Heart left ventricle (tissue), 16 donors: ENCODE measurements at regions of chr13 and their contacts with region 1.

Region 1: DNA sequence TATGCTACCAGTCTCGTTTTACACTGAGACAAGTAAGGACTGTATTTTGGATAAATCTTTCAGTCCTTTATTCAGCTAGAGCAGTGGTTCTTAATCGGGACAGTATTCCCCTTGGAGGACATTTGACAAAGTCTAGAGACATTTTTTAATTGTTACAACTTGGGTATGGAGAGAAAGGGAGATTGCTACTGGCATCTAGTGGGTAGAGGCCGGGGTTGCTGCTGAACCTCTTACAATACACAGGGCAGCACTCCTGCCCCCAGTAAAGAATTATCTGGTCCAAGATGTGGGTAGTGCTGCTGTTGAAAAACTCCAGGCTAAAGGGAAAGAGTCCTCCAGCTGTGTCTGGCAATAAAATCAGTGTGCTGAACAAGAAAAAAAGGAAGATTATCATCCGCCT is 334.8 kb downstream of the SLC7A1 start:
- DNase-seq: no peak
- ATAC-seq: peak; percentile 56 to 87 (median 83)
- H3K4me3 ChIP-seq: no peak overlapping the region
- H3K27ac ChIP-seq: no peak overlapping the region
- H3K4me1 ChIP-seq: peaks cover 0 to 3% (median 0%) of the 10 kb centered on the region in 12 donors
- H3K27me3 ChIP-seq: no peaks in the 10 kb centered on the region
- CTCF ChIP-seq: peak in 10 of 12 donors; percentile 16 to 52 (median 39)
- POLR2A ChIP-seq: no peak

Region 2: DNA sequence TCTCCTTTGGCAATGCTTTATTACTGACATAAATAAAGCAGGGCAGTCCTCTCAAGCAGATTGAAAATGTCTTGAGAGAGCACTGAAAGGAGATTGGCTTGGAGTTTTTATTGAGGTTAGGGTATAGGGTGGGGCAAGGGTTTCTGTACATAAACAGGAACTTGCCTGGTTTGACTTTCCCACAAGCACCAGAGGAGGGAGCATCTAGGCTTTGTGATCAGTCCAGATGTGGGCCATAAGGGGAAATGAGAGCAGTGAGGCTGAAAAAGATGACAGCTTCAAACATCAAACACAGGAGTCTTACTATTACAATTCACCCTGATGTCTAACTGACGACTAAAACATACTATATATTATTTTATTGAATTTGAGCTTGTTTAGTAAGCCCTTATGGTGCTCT is 179.6 kb before region 1 on chr13:
- intact Hi-C with region 1: loop called in 1 of 10 experiments (anchors 5 kb)
- DNase-seq: no peak
- ATAC-seq: peak in 1 of 4 donors; percentile 53
- H3K4me3 ChIP-seq: no peak overlapping the region
- H3K27ac ChIP-seq: no peak overlapping the region
- H3K4me1 ChIP-seq: peaks cover 0 to 7% (median 0%) of the 10 kb centered on the region in 12 donors
- H3K27me3 ChIP-seq: no peaks in the 10 kb centered on the region
- CTCF ChIP-seq: peak in 3 of 12 donors; percentile 16 to 25 (median 17)
- POLR2A ChIP-seq: no peak

Region 3: DNA sequence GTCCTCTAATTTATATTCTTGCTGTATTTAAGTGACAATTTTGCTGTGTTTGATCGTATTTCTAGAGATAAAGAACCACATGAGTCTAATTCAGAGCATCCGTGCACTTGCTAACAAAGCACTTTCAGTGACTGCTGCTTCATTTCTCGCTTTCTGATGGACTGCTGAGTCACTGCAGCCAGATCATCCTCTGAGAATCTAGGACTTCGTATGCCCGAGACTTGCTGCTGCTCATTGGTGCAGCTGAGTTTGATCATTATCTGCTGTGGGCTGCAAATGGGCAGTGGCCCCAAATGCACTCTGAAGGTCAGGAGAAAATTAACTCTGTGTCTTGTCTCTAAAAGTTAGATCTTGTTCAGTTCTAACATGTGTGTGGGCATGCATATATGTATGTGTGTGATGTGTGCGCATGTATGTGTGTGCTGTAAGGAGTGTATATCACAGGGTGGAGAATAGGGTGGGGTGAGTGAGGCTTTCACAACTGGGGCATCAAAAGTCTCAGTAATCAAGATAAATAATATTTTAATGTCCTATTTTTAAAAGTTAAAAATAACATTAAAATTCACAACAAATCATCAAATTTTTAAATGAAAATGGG is 97.9 kb before region 1 on chr13:
- intact Hi-C with region 1: no loop called
- DNase-seq: no peak
- ATAC-seq: no peak
- H3K4me3 ChIP-seq: no peak overlapping the region
- H3K27ac ChIP-seq: no peak overlapping the region
- H3K4me1 ChIP-seq: no peaks in the 10 kb centered on the region
- H3K27me3 ChIP-seq: no peaks in the 10 kb centered on the region
- CTCF ChIP-seq: no peak
- POLR2A ChIP-seq: no peak

Region 4: DNA sequence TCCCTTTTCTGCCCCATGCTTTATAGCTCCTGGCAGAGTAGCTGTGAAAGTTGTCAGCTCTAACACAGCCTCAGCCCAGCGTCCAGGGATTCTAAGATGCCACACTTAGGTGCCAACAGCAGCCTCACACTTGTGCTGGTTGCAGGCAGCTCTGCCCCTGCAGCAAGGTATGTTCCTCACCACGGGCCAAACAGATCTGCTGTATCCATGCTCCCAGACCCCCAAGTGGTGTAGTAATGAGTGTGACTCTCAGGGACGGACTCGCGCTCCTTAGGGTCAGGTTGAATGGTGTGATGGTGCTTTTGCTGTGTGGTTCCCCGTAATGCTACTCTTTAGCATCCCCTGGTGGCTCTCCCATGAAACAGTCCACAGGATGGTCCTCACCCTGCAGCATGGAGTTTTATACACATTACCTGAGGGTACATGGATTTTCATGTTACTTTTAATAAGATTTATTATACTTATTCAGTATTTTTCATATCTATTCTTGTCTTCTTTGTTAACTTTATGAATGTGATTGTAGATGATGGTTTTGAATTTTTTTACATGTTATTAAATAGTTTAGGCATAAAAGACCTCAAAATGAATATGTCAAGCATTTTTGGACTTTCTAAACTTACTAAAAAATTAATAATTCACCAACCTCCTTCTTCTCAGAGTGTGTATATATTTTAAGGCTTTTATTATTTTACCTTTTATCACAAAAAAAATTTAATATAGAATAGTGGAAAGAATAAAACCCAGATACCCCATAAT is 102.3 kb after region 1 on chr13:
- intact Hi-C with region 1: loop called in 1 of 10 experiments (anchors 10 kb)
- DNase-seq: peak in 2 of 5 donors; percentile 15 to 27
- ATAC-seq: peak; percentile 74 to 91 (median 84)
- H3K4me3 ChIP-seq: no peak overlapping the region
- H3K27ac ChIP-seq: no peak overlapping the region
- H3K4me1 ChIP-seq: no peaks in the 10 kb centered on the region
- H3K27me3 ChIP-seq: no peaks in the 10 kb centered on the region
- CTCF ChIP-seq: peak; percentile 61 to 86 (median 79)
- POLR2A ChIP-seq: no peak